Aorta (tissue), 5 donors: ENCODE measurements at regions of chr17 and their contacts with region 1.

Region 1: DNA sequence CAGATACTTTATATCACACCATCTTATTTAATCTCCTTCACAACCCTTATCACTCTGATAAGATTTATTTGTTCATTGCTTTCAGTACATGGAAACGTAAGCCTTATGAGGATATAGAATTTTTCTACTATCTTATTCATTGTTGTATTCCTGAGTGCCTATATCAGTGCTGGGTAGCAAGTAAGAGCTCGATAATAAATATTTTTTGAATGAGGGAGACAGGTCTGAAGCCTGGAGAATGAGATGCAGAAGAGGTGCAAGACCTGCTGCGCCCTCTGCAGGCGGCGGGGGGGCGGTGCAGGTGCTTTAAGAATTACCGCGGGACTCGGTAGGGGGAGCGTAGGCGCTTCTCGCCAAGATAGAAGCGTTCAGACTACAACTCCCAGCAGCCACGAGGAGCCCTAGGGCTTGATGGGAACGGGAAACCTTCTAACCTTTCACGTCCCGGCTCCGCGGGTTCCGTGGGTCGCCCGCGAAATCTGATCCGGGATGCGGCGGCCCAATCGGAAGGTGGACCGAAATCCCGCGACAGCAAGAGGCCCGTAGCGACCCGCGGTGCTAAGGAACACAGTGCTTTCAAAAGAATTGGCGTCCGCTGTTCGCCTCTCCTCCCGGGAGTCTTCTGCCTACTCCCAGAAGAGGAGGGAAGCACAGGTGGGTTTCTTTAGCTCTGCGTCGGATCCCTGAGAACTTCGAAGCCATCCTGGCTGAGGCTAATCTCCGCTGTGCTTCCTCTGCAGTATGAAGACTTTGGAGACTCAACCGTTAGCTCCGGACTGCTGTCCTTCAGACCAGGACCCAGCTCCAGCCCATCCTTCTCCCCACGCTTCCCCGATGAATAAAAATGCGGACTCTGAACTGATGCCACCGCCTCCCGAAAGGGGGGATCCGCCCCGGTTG is at the start of gene WRAP53:
- DNase-seq: peak; percentile 98
- ATAC-seq: peak; percentile 95
- H3K4me3 ChIP-seq: peak within 1 kb of the TSS; percentile 91 to 96
- H3K27ac ChIP-seq: peak within 1 kb of the TSS in 1 of 2 donors; percentile 96
- H3K4me1 ChIP-seq: no peaks in the 10 kb centered on the region
- H3K27me3 ChIP-seq: no peaks in the 10 kb centered on the region
- total RNA-seq, gene WRAP53: 3.6 to 4.8 TPM

Region 2: DNA sequence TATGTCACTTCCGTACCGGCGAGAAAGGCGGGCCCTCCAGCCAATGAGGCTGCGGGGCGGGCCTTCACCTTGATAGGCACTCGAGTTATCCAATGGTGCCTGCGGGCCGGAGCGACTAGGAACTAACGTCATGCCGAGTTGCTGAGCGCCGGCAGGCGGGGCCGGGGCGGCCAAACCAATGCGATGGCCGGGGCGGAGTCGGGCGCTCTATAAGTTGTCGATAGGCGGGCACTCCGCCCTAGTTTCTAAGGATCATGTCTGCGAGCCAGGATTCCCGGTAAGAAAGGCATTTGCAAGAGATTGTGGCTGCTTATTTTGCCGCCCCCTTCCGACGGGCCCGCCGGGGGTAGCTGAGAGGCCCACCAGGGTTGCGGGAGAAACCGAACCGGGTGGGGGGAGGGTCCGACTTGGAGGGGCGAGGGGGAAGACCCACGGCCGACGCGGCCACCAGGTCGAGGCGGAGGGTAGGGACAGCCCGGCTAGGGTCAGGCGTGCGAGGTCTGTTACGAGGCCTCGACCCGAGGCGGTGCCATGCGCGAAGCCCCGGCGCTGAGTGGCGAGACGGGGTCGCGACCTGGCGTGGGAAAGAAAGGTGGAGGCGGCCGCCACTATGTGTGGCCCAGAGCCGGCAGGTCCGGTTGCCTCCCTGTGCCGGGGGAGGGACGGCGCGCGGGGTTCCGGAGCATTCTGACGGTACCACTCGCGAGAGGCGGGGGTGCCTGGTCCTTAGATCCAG is 115.4 kb before region 1 on chr17:
- intact Hi-C with region 1: loop called in 1 of 2 experiments (anchors 5 kb)
- DNase-seq: peak; percentile 85 to 99
- ATAC-seq: peak; percentile 97
- H3K4me3 ChIP-seq: peak overlapping the region; percentile 68 to 90
- H3K27ac ChIP-seq: peak overlapping the region; percentile 71 to 86
- H3K4me1 ChIP-seq: no peaks in the 10 kb centered on the region
- H3K27me3 ChIP-seq: no peaks in the 10 kb centered on the region

Region 3: DNA sequence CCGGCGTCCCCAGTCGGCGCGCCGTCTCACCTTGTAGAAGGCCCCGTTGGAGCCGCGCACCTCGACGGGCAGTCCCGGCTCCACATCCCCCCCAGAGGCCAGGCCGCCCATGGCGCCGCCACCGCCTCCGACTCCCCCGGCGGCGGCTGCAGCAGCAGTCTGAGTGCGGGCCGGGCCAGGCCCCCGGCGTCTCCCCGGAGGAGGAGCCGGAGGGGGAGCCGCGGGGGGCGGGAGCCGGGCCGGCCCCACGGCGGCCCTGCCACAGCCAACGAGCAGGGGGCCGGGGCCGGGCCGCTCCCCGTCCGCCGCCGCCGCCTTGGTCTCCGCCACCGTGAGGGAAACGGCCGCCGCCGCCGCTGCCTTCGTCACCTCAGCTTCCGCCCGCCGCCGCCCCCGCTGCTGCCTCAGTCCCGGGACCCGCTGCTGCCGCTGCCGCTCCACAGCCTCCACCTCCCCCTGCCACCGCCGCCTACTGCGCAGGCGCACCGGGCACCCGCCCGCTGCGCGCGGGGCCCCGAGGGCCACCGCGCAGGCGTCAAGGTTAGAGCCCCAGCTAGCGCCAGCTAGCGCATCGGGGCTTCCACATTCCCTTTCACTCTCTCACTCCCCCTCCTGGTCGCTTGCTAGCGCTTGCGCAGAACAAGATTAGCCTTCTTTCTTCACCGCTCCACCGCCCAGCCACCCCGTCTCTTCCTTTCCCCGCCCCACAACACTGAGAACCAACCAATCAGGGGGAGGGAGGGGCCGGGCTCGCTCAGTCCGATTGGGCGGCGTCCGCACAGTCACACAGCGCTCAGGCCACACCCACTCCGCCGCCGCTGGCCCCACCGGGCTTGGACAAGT is 73.5 kb before region 1 on chr17 and contains the start of gene FXR2:
- intact Hi-C with region 1: loop called in 1 of 2 experiments (anchors 1 kb)
- DNase-seq: peak; percentile 100
- ATAC-seq: peak; percentile 99
- H3K4me3 ChIP-seq: peak within 1 kb of the TSS; percentile 80 to 97
- H3K27ac ChIP-seq: peak within 1 kb of the TSS in 1 of 2 donors; percentile 72
- H3K4me1 ChIP-seq: peaks cover 2 to 9% of the 10 kb centered on the region in 2 donors
- H3K27me3 ChIP-seq: no peaks in the 10 kb centered on the region
- total RNA-seq, gene FXR2: 25.3 to 31.1 TPM

Region 4: DNA sequence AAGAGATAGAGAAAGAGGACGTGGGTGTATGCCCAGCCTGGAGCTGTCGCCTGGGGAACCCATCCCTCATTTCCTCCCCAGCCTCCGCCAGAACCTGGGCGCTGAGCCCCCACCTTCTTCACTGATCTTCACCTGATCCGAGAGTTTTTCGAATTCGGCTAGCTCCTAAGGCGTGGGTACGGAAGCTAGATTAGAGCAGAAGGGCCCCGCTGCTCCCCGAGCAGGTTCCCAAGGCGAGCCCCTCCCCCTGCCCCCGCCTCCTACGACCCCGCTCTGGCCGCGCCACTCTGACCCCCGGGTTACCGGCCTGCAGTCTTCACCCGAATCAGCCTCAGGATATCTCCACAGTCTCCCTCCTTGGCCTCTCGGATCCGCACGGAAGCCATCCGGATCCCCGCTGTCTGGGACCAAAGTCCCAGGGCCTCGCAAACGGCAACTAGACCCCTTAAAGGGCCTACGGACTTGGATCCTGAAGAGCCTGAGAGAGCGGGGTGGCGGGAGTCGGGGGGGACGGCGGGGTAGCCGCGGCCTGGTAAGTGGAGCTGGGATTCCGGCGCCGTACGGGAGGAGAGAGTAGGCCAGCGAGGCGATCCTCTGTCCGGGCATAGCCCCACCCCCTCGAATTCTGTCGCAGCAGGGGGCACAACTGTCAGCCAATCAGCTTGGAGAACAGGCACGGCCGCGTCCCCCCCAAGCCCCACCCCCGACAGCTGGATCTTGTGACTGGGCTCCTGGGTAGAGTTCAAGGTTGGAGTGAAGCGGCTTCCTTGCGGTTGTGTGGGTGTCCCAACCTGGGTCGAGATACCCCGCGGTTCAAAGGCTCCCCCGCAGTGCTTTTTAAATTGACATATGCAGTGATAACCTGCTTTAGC is 60.7 kb before region 1 on chr17 and contains the start of gene SAT2:
- intact Hi-C with region 1: loop called (anchors 5 kb)
- DNase-seq: peak; percentile 97 to 98
- ATAC-seq: peak; percentile 98
- H3K4me3 ChIP-seq: peak within 1 kb of the TSS; percentile 78 to 93
- H3K27ac ChIP-seq: peak within 1 kb of the TSS in 1 of 2 donors; percentile 30
- H3K4me1 ChIP-seq: no peaks in the 10 kb centered on the region
- H3K27me3 ChIP-seq: no peaks in the 10 kb centered on the region
- total RNA-seq, gene SAT2: 45.9 to 67.4 TPM

Region 5: DNA sequence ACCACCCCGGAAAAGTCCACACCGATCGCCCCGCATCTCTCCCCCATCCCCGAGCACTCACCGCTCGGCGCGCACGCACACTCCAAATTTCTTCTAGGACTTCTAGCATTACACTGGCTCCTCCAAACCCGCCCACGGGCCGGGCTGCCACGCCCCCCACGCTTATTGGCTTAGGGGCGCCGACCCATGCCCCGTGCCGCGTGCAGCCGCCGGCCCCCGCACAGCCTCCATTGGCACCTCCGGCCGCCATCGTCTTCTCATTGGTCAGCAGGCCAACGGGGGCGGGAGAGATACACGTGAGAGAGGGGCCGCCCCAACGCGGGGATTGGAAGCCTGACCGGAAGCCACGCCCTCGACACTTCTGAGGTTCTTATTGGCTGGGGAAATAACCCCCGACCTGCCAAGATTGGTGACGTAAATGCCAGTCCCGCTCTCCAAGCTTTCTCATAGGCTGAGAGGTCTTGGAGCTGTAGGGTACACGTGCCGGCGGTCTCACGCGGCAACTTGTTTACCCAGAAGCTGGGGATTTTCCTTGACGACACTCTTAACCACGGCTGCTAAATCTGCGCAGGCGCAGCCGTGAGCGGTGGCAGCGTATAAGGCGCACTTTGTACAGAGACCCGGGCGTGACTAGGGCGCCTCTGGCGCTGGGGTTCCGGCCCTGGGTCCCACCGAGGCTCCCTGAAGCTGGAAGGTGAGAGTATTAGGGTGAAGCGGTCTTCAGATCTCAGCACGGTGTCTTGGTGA is 468.3 kb after region 1 on chr17:
- intact Hi-C with region 1: loop called in 1 of 2 experiments (anchors 10 kb)
- DNase-seq: peak; percentile 100
- ATAC-seq: peak; percentile 83
- H3K4me3 ChIP-seq: peak overlapping the region; percentile 78 to 81
- H3K27ac ChIP-seq: peak overlapping the region; percentile 99
- H3K4me1 ChIP-seq: no peaks in the 10 kb centered on the region
- H3K27me3 ChIP-seq: no peaks in the 10 kb centered on the region